SK-N-SH (cell line): ENCODE measurements at regions of chr5 and their contacts with region 1.

Region 1: GRCh38 chr5:56270568-56271392 is 37.6 kb upstream of the ANKRD55 start:
- DNase-seq: peak; percentile 72
- H3K4me3 ChIP-seq: no peak overlapping the region; a peak in 1 of 4 replicates
- H3K27ac ChIP-seq: peak overlapping the region; percentile 1 to 90; a peak in 3 of 4 replicates
- H3K4me1 ChIP-seq: peaks cover 10 to 24% of the 10 kb centered on the region in 2 experiments; a peak in 3 of 4 replicates
- H3K27me3 ChIP-seq: no peaks in the 10 kb centered on the region
- CTCF ChIP-seq: peak; percentile 99
- EP300 ChIP-seq: peak in 1 of 2 experiments; percentile 59; a peak in 2 of 4 replicates
- RAD21 ChIP-seq: peak; percentile 100

Region 2: GRCh38 chr5:55936100-55936693 is 334.6 kb before region 1 on chr5:
- CTCF ChIA-PET with region 1: interaction called, 56 read pairs
- POLR2A ChIA-PET with region 1: interaction called, 3 read pairs
- DNase-seq: peak; percentile 78
- H3K4me3 ChIP-seq: no peak overlapping the region
- H3K27ac ChIP-seq: peak overlapping the region in 1 of 2 experiments; percentile 16; a peak in 1 of 4 replicates
- H3K4me1 ChIP-seq: no peaks in the 10 kb centered on the region; a peak in 1 of 4 replicates
- H3K27me3 ChIP-seq: no peaks in the 10 kb centered on the region
- CTCF ChIP-seq: peak; percentile 98
- EP300 ChIP-seq: no peak
- RAD21 ChIP-seq: peak; percentile 96

Region 3: GRCh38 chr5:55994574-55995333 is 276.0 kb before region 1 on chr5 and contains the start of gene IL6ST:
- CTCF ChIA-PET with region 1: no interaction called
- POLR2A ChIA-PET with region 1: no interaction called
- DNase-seq: peak; percentile 99
- H3K4me3 ChIP-seq: peak within 1 kb of the TSS; percentile 72 to 74
- H3K27ac ChIP-seq: peak within 1 kb of the TSS; percentile 96 to 98
- H3K4me1 ChIP-seq: peaks cover 12 to 14% of the 10 kb centered on the region in 2 experiments; a peak in 3 of 4 replicates
- H3K27me3 ChIP-seq: no peaks in the 10 kb centered on the region
- CTCF ChIP-seq: peak; percentile 16
- EP300 ChIP-seq: peak in 1 of 2 experiments; percentile 10; a peak in 1 of 4 replicates
- RAD21 ChIP-seq: no peak
- polyA plus RNA-seq, gene IL6ST: 16.0 and 21.1 TPM in 2 replicates

Region 4: GRCh38 chr5:56303515-56303914 is 32.7 kb after region 1 on chr5:
- CTCF ChIA-PET with region 1: interaction called, 24 read pairs
- POLR2A ChIA-PET with region 1: interaction called, 4 read pairs
- DNase-seq: no peak
- H3K4me3 ChIP-seq: no peak overlapping the region
- H3K27ac ChIP-seq: peak overlapping the region in 1 of 2 experiments; percentile 100; a peak in 2 of 4 replicates
- H3K4me1 ChIP-seq: peaks cover 0 to 28% of the 10 kb centered on the region in 2 experiments; a peak in 3 of 4 replicates
- H3K27me3 ChIP-seq: no peaks in the 10 kb centered on the region
- CTCF ChIP-seq: no peak
- EP300 ChIP-seq: no peak
- RAD21 ChIP-seq: peak; percentile 41

Region 5: DNA sequence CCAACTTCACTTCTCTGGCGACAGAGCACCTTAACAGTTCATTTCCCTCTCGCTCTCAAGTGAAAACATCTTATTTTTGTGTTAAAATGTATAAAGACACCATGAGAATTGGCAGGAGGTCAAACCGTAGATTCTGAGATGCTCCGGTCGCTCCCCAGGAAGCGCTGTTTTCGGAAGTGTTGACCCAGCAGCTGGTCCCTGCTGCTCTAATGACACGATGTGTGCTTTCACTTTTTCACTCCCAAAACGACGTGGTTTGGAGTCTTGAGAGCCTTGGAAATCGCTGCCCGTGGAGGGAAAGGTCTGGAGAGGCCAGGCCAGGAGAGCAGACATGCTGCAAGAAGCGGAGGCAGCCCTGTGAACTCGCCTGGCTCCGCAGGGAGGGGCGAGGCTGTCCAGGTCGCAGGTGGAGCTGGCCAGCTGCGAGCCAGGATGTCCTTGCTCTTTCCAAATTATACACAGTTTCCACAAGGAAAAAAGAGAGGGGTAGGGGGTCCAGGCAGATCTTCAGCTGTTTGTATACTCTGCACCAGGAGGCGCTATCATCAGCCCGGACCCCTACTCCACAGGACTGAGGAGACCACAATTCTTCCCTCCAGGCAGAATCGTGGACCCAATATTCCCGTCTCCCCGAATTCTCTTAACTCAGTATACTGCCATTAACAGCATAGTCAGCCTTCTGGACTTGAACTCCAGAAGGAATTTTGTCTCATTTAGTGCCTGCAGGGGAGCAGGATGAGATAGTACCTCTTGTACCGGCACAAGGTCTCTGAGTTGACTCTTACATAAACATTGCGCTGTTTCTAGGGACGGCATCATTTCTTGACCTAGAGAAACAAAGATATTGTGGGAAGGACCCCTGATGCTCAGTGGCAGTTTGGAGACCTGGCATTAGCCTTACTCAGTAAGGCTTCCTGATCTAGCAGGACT is 210.9 kb after region 1 on chr5:
- CTCF ChIA-PET with region 1: interaction called, 28 read pairs
- POLR2A ChIA-PET with region 1: interaction called, 5 read pairs
- DNase-seq: peak; percentile 70
- H3K4me3 ChIP-seq: peak overlapping the region; percentile 53 to 61
- H3K27ac ChIP-seq: peak overlapping the region; percentile 73 to 97; a peak in 3 of 4 replicates
- H3K4me1 ChIP-seq: peaks cover 11 to 35% of the 10 kb centered on the region in 2 experiments
- H3K27me3 ChIP-seq: no peaks in the 10 kb centered on the region
- CTCF ChIP-seq: peak; percentile 35
- EP300 ChIP-seq: no peak
- RAD21 ChIP-seq: no peak

Region 6: GRCh38 chr5:56814963-56815658 is 544.3 kb after region 1 on chr5 and contains the start of gene MAP3K1:
- CTCF ChIA-PET with region 1: interaction called, 27 read pairs
- POLR2A ChIA-PET with region 1: interaction called, 4 read pairs
- DNase-seq: peak; percentile 96
- H3K4me3 ChIP-seq: peak within 1 kb of the TSS; percentile 91 to 93
- H3K27ac ChIP-seq: peak within 1 kb of the TSS; percentile 77 to 97
- H3K4me1 ChIP-seq: peaks cover 6 to 14% of the 10 kb centered on the region in 2 experiments; a peak in 3 of 4 replicates
- H3K27me3 ChIP-seq: no peaks in the 10 kb centered on the region
- CTCF ChIP-seq: no peak; the same call in 1 of the 2 replicates
- EP300 ChIP-seq: no peak
- RAD21 ChIP-seq: no peak; the same call in 1 of the 2 replicates
- polyA plus RNA-seq, gene MAP3K1: 2.2 and 3.5 TPM in 2 replicates

Region 7: GRCh38 chr5:56838409-56839039 is 567.7 kb after region 1 on chr5:
- CTCF ChIA-PET with region 1: interaction called, 114 read pairs
- POLR2A ChIA-PET with region 1: interaction called, 7 read pairs
- DNase-seq: no peak
- H3K4me3 ChIP-seq: peak overlapping the region in 1 of 2 experiments; percentile 31; a peak in 1 of 4 replicates
- H3K27ac ChIP-seq: peak overlapping the region; percentile 46 to 88; a peak in 3 of 4 replicates
- H3K4me1 ChIP-seq: peaks cover 0 to 54% of the 10 kb centered on the region in 2 experiments; a peak in 3 of 4 replicates
- H3K27me3 ChIP-seq: no peaks in the 10 kb centered on the region
- CTCF ChIP-seq: peak; percentile 71
- EP300 ChIP-seq: 0 out of 4 replicates have a peak, but pooled peaks of 1 of the 2 experiments have one; percentile 25
- RAD21 ChIP-seq: peak; percentile 83

Region 8: DNA sequence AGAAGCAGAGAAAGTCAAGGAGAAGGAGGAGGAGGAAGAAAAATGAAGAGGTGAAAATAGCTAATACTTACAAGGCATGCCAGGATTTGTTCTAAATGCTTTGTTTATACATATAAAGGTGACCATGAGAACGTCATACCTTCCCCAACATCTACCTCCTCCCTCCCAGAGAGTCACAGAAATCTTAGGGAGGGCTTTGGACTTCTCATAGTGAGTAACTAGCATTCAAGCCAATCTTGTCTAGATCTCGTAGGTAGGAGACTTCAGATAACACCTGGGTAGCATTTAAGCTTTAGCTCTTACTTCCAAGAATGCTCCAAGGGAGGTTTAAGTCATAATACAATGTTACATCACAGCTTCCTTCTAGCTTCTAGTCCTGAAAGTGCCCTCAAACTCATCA is 866.6 kb after region 1 on chr5:
- CTCF ChIA-PET with region 1: interaction called, 23 read pairs
- POLR2A ChIA-PET with region 1: no interaction called
- DNase-seq: no peak
- H3K4me3 ChIP-seq: no peak overlapping the region
- H3K27ac ChIP-seq: no peak overlapping the region
- H3K4me1 ChIP-seq: no peaks in the 10 kb centered on the region
- H3K27me3 ChIP-seq: no peaks in the 10 kb centered on the region; the same call in 1 of the 2 replicates
- CTCF ChIP-seq: no peak
- EP300 ChIP-seq: no peak
- RAD21 ChIP-seq: no peak